Caco-2 (cell line): ENCODE measurements at regions of chr6 and their contacts with region 1.

Region 1: GRCh38 chr6:34161857-34162515 is 16.1 kb upstream of the GRM4 start:
- DNase-seq: no peak
- H3K4me3 ChIP-seq: no peak overlapping the region
- H3K4me3 Mint-ChIP-seq: no peak overlapping the region
- H3K27ac Mint-ChIP-seq: no peak overlapping the region
- H3K4me1 ChIP-seq: no peaks in the 10 kb centered on the region
- H3K4me1 Mint-ChIP-seq: no peaks in the 10 kb centered on the region
- H3K27me3 ChIP-seq: no peaks in the 10 kb centered on the region
- H3K27me3 Mint-ChIP-seq: peaks cover 12% of the 10 kb centered on the region
- CTCF ChIP-seq: no peak

Region 2: DNA sequence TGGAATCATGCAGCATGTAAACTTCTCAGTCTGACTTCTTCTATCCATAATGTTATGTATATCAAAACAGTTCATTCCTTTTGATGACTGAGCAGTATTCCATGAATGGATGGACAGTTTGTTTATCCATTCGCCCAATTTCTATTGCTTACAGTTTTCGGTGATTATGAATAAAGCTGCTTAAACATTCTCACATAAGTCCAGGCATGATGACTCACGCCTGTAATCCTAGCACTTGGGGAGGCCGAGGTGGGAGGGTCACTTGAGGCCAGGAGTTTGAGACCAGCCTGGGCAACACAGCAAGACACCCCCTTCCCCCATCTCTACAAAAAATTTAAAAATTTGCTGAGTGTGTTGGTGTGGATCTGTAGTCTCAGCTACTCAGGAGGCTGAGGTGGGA is 51.8 kb after region 1 on chr6:
- CTCF ChIA-PET with region 1: interaction called, 10 read pairs
- POLR2A ChIA-PET with region 1: no interaction called
- intact Hi-C with region 1: no loop called
- DNase-seq: no peak
- H3K4me3 ChIP-seq: no peak overlapping the region
- H3K4me3 Mint-ChIP-seq: no peak overlapping the region
- H3K27ac Mint-ChIP-seq: no peak overlapping the region
- H3K4me1 ChIP-seq: no peaks in the 10 kb centered on the region
- H3K4me1 Mint-ChIP-seq: no peaks in the 10 kb centered on the region
- H3K27me3 ChIP-seq: no peaks in the 10 kb centered on the region
- H3K27me3 Mint-ChIP-seq: no peaks in the 10 kb centered on the region
- CTCF ChIP-seq: no peak

Region 3: GRCh38 chr6:34260576-34261267 is 98.7 kb after region 1 on chr6:
- CTCF ChIA-PET with region 1: no interaction called
- POLR2A ChIA-PET with region 1: no interaction called
- intact Hi-C with region 1: no loop called
- DNase-seq: no peak
- H3K4me3 ChIP-seq: no peak overlapping the region
- H3K4me3 Mint-ChIP-seq: no peak overlapping the region
- H3K27ac Mint-ChIP-seq: no peak overlapping the region
- H3K4me1 ChIP-seq: no peaks in the 10 kb centered on the region
- H3K4me1 Mint-ChIP-seq: peaks cover 5% of the 10 kb centered on the region
- H3K27me3 ChIP-seq: no peaks in the 10 kb centered on the region
- H3K27me3 Mint-ChIP-seq: no peaks in the 10 kb centered on the region
- CTCF ChIP-seq: no peak